ENCODE measurements at regions of chr16 and their contacts with region 1.

Region 1: GRCh38 chr16:70653809-70654771 is 7.7 kb downstream of the IL34 start:
- DNase-seq: peak; percentile 89
- ATAC-seq: peak; percentile 71
- H3K4me3 Mint-ChIP-seq: no peak overlapping the region
- H3K27ac Mint-ChIP-seq: no peak overlapping the region
- H3K4me1 Mint-ChIP-seq: peaks cover 19% of the 10 kb centered on the region
- H3K27me3 Mint-ChIP-seq: no peaks in the 10 kb centered on the region
- CTCF ChIP-seq: peak; percentile 89

Region 2: GRCh38 chr16:70454222-70455034 is 199.7 kb before region 1 on chr16 and contains the start of gene FCSK:
- CTCF ChIA-PET with region 1: no interaction called
- POLR2A ChIA-PET with region 1: no interaction called
- DNase-seq: peak; percentile 84
- ATAC-seq: peak; percentile 94
- H3K4me3 Mint-ChIP-seq: peak within 1 kb of the TSS; percentile 92
- H3K27ac Mint-ChIP-seq: peak within 1 kb of the TSS; percentile 97
- H3K4me1 Mint-ChIP-seq: peaks cover 10% of the 10 kb centered on the region
- H3K27me3 Mint-ChIP-seq: no peaks in the 10 kb centered on the region
- CTCF ChIP-seq: no peak
- total RNA-seq, gene FCSK: 7.0 to 10.6 TPM (median 8.6 TPM) in 3 replicates

Region 3: GRCh38 chr16:70561623-70562022 is 92.5 kb before region 1 on chr16:
- CTCF ChIA-PET with region 1: interaction called, 10 read pairs
- POLR2A ChIA-PET with region 1: no interaction called
- DNase-seq: no peak
- ATAC-seq: no peak
- H3K4me3 Mint-ChIP-seq: no peak overlapping the region
- H3K27ac Mint-ChIP-seq: peak overlapping the region; percentile 13; the same call in 1 of the 2 replicates
- H3K4me1 Mint-ChIP-seq: no peaks in the 10 kb centered on the region
- H3K27me3 Mint-ChIP-seq: no peaks in the 10 kb centered on the region
- CTCF ChIP-seq: no peak

Region 4: GRCh38 chr16:70576431-70577255 is 77.4 kb before region 1 on chr16:
- CTCF ChIA-PET with region 1: interaction called, 20 read pairs
- POLR2A ChIA-PET with region 1: interaction called, 3 read pairs
- DNase-seq: no peak
- ATAC-seq: peak; percentile 13
- H3K4me3 Mint-ChIP-seq: no peak overlapping the region
- H3K27ac Mint-ChIP-seq: peak overlapping the region; percentile 78
- H3K4me1 Mint-ChIP-seq: peaks cover 14% of the 10 kb centered on the region
- H3K27me3 Mint-ChIP-seq: no peaks in the 10 kb centered on the region
- CTCF ChIP-seq: no peak

Region 5: DNA sequence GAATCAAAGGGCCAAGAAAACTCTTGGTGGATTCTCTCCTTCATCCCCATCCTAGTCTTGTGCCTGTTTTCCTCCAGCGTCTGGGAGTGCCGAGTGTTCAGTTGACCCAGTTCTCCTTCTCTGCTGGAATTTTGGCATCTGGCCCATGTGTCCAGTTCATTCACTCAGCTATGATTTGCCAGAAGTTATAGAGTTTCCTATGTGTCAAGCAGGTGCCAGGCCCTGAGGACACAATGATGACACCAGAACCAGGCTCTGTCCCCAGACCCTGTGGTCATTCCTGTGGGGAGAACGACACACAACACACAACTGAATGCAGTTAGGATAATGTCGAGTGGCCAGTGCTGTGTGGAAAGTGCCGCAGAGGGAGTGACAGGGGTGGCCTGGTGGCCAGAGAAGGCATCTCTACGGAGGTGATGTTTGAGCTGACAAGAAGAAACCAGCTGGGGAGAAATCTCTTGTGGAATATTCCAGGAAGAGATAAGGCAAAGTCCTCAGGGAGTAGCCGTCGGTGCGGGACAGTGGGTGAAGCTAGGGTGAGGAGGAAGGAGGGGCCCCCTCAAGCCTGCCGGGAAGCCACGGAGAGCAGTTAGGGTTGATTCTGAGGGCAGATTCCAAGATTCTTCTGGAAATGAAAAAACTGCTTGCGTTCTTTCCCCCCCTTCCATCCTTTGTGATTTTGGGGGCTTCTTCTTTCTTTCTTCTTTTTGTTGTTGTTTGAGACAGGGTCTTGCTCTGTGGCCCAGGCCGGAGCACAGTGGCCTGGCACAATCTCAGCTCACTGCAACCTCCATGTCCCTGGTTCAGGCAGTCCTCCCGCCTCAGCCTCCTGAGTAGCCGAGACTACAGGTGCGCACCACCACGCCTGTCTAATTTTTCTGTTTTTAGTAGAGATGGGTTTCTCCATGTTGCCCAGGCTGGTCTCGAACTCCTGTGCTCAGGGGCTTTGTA is 43.5 kb before region 1 on chr16:
- CTCF ChIA-PET with region 1: interaction called, 22 read pairs
- POLR2A ChIA-PET with region 1: no interaction called
- DNase-seq: no peak
- ATAC-seq: 0 out of 2 replicates have a peak, but pooled peaks have one; percentile 3
- H3K4me3 Mint-ChIP-seq: no peak overlapping the region
- H3K27ac Mint-ChIP-seq: peak overlapping the region; percentile 74; the same call in 1 of the 2 replicates
- H3K4me1 Mint-ChIP-seq: peaks cover 23% of the 10 kb centered on the region
- H3K27me3 Mint-ChIP-seq: peaks cover 20% of the 10 kb centered on the region
- CTCF ChIP-seq: no peak; the same call in 1 of the 2 replicates

Region 6: DNA sequence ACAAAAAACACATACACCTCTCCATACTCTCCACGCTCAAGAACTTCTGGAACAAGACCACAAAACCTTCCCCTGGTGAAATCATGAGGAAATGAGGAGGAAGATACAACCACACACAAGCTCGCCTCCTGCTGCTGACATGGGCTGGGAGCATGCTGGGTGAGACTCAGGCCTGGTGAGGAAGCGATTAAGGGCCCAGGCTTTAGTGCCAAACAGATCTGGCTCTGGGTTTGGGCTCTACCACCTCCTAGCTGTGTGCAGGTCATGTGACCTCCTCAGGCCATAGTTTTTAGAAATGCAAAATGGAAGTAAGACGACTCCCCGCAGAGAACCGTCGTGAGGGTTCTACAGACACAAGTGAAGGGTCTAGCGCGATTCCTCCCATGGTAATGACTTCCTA is 105.6 kb after region 1 on chr16:
- CTCF ChIA-PET with region 1: no interaction called
- POLR2A ChIA-PET with region 1: no interaction called
- DNase-seq: no peak
- ATAC-seq: peak; percentile 61
- H3K4me3 Mint-ChIP-seq: no peak overlapping the region
- H3K27ac Mint-ChIP-seq: peak overlapping the region; percentile 57; the same call in 1 of the 2 replicates
- H3K4me1 Mint-ChIP-seq: peaks cover 17% of the 10 kb centered on the region
- H3K27me3 Mint-ChIP-seq: no peaks in the 10 kb centered on the region
- CTCF ChIP-seq: no peak

Measured in WTC11 (cell line).